Right cardiac atrium (tissue), 5 donors: ENCODE measurements at regions of chr1 and their contacts with region 1.

Region 1: DNA sequence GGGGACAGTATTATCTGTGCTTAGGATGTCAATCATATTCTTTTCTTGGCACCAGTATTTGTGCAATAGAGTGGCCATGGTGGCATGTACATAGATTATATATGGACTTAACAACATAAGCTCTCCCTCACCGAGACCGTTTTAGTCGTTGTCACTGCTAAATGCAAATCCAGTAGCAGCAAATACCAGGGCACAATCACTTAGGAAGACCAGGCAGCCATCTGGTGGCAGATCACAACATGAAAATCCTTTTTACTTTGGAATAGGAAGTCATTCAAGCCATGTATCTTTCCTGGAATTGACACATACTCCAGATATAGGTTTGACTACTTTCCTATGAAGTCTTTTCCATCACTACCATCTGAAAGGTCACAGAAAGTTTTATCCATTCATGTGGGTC is 53.2 kb upstream of the C1orf87 start:
- DNase-seq: no peak
- ATAC-seq: no peak
- H3K4me3 ChIP-seq: no peak overlapping the region
- H3K27ac ChIP-seq: no peak overlapping the region
- H3K4me1 ChIP-seq: no peaks in the 10 kb centered on the region
- H3K27me3 ChIP-seq: no peaks in the 10 kb centered on the region

Region 2: GRCh38 chr1:59393211-59394180 is 733.2 kb before region 1 on chr1:
- intact Hi-C with region 1: no loop called
- DNase-seq: peak; percentile 72 to 90 (median 84)
- ATAC-seq: peak; percentile 96
- H3K4me3 ChIP-seq: no peak overlapping the region
- H3K27ac ChIP-seq: peak overlapping the region; percentile 93
- H3K4me1 ChIP-seq: peaks cover 3% of the 10 kb centered on the region
- H3K27me3 ChIP-seq: no peaks in the 10 kb centered on the region

Region 3: GRCh38 chr1:59971464-59971911 is 155.2 kb before region 1 on chr1:
- intact Hi-C with region 1: loop called in 3 of 4 experiments (anchors 2 to 10 kb)
- DNase-seq: peak; percentile 65 to 86 (median 83)
- ATAC-seq: peak; percentile 86 to 90
- H3K4me3 ChIP-seq: no peak overlapping the region
- H3K27ac ChIP-seq: no peak overlapping the region
- H3K4me1 ChIP-seq: no peaks in the 10 kb centered on the region
- H3K27me3 ChIP-seq: no peaks in the 10 kb centered on the region

Region 4: DNA sequence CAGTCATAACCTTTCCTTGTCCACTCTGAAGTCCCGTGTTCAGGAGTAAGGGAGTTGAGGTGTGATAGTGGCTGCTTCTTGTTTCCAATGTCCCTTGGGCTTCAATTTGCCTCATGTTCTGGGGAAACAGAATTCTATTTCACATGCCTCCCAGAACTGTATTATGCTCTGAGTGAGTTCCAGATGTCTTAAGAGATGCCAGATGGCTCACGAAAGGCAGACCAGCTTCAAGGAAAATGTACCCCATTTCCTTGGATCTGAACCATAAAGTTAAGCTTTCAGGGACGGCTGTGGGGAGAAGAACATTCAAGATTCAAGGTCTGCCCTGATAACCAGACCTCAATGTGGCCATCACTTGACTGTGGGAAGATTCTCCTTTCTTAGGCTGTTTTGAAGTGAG is 95.6 kb before region 1 on chr1:
- intact Hi-C with region 1: no loop called
- DNase-seq: no peak
- ATAC-seq: no peak
- H3K4me3 ChIP-seq: no peak overlapping the region
- H3K27ac ChIP-seq: no peak overlapping the region
- H3K4me1 ChIP-seq: no peaks in the 10 kb centered on the region
- H3K27me3 ChIP-seq: no peaks in the 10 kb centered on the region

Region 5: GRCh38 chr1:60196026-60196425 is 69.3 kb after region 1 on chr1:
- intact Hi-C with region 1: no loop called
- DNase-seq: no peak
- ATAC-seq: no peak
- H3K4me3 ChIP-seq: no peak overlapping the region
- H3K27ac ChIP-seq: no peak overlapping the region
- H3K4me1 ChIP-seq: no peaks in the 10 kb centered on the region
- H3K27me3 ChIP-seq: no peaks in the 10 kb centered on the region